Left cardiac atrium (tissue), 4 donors: ENCODE measurements at regions of chr12 and their contacts with region 1.

Region 1: DNA sequence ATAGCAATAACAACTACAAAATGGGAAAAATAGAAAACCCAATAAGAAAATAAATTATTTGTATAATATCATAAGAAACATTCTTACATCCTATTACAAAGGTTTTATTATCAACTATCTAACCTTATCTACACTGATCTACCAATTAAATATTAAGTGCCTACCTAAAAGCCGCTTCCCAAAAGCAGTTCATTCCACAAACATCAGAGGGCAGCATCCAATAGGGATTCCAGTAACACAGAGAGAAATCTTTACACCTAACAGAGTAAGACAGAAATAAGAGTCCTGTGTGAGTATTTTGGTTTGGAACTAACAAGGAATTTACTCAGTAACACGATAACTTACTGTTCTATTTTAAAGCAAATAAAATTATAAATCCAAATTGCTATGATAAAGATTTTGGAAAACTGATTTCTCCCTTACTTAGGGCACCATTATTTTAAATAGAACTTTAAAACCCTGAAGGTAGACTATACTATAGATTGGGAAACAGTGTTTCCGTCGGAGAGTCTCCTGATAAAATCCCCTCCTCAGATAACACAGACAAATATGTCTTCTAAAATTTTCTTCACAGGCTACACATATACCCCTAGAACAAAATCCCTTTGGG is 15.0 kb downstream of the GXYLT1 start:
- DNase-seq: no peak
- ATAC-seq: peak; percentile 81 to 86

Region 2: GRCh38 chr12:41907021-41907420 is 222.7 kb before region 1 on chr12:
- intact Hi-C with region 1: no loop called
- DNase-seq: no peak
- ATAC-seq: no peak

Region 3: DNA sequence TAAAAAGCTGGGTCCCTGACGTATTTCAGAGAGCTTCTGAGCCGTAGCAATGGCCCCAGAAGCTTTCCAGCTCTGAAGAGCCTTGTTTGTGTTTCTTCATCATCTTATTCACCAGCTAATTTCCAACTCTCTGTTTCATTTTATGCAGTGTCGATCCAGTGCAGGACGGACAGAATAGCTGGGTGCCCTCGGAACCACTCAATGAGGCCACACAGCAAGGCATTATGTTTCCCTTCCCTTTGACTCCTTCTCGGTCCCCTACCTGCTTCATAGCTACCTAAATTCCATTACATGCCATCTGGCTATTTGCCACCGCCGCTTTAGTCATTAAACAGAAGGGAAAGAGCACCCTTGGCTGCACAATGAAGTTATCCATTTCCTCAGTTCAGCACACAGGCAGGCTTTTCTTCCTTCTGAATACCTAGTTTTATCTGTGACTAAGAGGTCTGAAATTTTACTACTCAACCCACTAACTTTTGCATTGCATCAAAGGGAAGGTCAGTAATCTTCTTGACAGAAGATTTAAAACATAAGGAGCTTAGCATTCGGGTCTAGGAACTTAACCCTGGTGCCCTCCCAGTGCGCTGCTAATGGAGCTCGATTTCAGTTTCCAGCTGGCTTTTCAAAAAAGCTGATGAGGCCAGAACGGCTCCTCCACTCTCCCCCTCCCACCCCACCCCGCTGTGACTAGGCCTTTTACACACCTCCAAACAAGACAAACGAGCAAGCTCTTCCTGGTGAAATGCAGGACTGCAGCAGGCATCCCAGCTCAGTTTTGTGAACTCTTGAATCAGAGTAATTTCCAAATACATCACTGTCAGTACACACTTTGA is 161.8 kb before region 1 on chr12:
- intact Hi-C with region 1: no loop called
- DNase-seq: no peak
- ATAC-seq: peak in 1 of 2 donors; percentile 64

Region 4: GRCh38 chr12:42325653-42326474 is 196.2 kb after region 1 on chr12 and contains the starts of genes PPHLN1 and ZCRB1:
- intact Hi-C with region 1: loop called in 1 of 2 experiments (anchors 5 kb)
- DNase-seq: peak; percentile 89
- ATAC-seq: peak; percentile 98 to 99
- total RNA-seq, gene PPHLN1: 24.6 to 37.5 TPM
- total RNA-seq, gene ZCRB1: 46.6 to 51.8 TPM

Region 5: GRCh38 chr12:42332301-42333285 is 202.9 kb after region 1 on chr12:
- intact Hi-C with region 1: loop called (anchors 2 to 5 kb)
- DNase-seq: no peak
- ATAC-seq: peak in 1 of 2 donors; percentile 41